Activated CD4-positive, alpha-beta T cell treated with anti-CD3 and anti-CD28 coated beads, Interleukin-2, amount 10 ng/mL, durations not matched to agents 7 days and 5 days (primary cell): ENCODE measurements at regions of chr16 and their contacts with region 1.

Region 1: DNA sequence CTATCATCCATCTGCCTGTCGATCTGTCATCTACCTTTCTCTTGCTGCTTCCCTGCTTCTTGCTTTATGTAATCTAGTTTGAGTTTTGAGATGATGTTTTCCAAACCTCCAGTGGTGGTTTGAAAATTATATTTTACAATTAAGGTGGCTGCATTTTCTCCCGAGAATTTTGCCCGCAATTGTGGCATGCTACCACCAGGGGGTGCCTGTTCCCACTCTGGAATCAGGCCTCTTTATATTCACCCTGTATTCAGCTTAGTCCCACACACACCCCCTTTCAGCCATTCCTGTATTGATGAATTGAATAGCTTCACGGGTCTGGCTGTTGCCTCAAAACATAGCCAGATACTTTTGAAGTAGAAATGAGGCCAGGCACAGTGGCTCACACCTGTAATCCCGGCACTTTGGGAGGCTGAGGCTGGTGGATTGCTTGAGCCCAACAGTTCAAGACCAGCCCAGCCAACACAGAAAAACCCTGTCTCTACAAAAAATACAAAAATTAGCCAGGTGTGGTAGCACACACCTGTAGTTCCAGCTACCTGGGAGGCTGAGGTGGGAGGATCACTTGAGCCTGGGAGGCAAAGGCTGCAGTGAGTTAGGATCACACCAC is 3.2 kb downstream of the PRSS22 start:
- DNase-seq: no peak
- H3K4me3 Mint-ChIP-seq: no peak overlapping the region
- H3K27ac Mint-ChIP-seq: no peak overlapping the region
- H3K4me1 Mint-ChIP-seq: peaks cover 10% of the 10 kb centered on the region
- H3K27me3 Mint-ChIP-seq: peaks cover 7% of the 10 kb centered on the region

Region 2: GRCh38 chr16:2838928-2839327 is 15.9 kb before region 1 on chr16:
- CTCF ChIA-PET with region 1: interaction called, 14 read pairs
- POLR2A ChIA-PET with region 1: no interaction called
- DNase-seq: peak; percentile 54
- H3K4me3 Mint-ChIP-seq: no peak overlapping the region
- H3K27ac Mint-ChIP-seq: no peak overlapping the region
- H3K4me1 Mint-ChIP-seq: peaks cover 21% of the 10 kb centered on the region
- H3K27me3 Mint-ChIP-seq: peaks cover 3% of the 10 kb centered on the region

Region 3: DNA sequence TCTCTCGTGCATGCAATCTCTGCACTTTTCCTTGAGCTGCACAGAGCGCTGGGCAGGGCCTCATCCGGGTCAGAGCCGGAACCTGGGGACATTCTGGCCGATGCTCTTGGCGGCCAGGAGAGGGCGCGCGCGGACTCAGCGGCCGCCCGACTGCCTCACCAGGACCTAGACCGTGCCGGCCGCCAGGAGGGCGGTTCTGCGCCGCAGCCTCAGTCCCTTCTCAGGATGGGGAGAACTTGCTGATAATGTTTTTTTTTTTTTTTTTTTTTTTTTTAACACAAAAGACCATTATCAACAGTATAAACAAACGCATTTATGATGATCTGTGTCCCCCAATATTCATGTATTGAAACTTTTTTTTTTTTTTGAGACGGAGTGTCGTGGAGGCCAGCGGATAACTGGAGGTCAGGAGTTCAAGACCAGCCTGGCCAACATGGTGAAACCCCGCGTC is 20.1 kb after region 1 on chr16:
- CTCF ChIA-PET with region 1: no interaction called
- POLR2A ChIA-PET with region 1: no interaction called
- DNase-seq: peak; percentile 69
- H3K4me3 Mint-ChIP-seq: no peak overlapping the region
- H3K27ac Mint-ChIP-seq: no peak overlapping the region
- H3K4me1 Mint-ChIP-seq: peaks cover 10% of the 10 kb centered on the region
- H3K27me3 Mint-ChIP-seq: peaks cover 7% of the 10 kb centered on the region

Region 4: GRCh38 chr16:2911580-2912329 is 57.0 kb after region 1 on chr16 and contains the start of gene FLYWCH1:
- CTCF ChIA-PET with region 1: no interaction called
- POLR2A ChIA-PET with region 1: no interaction called
- DNase-seq: peak; percentile 99
- H3K4me3 Mint-ChIP-seq: peak within 1 kb of the TSS; percentile 88
- H3K27ac Mint-ChIP-seq: peak within 1 kb of the TSS; percentile 89
- H3K4me1 Mint-ChIP-seq: peaks cover 30% of the 10 kb centered on the region
- H3K27me3 Mint-ChIP-seq: no peaks in the 10 kb centered on the region
- total RNA-seq, gene FLYWCH1: 46.8 to 52.7 TPM